HepG2 (cell line): ENCODE measurements at regions of chr10 and their contacts with region 1.

Region 1: DNA sequence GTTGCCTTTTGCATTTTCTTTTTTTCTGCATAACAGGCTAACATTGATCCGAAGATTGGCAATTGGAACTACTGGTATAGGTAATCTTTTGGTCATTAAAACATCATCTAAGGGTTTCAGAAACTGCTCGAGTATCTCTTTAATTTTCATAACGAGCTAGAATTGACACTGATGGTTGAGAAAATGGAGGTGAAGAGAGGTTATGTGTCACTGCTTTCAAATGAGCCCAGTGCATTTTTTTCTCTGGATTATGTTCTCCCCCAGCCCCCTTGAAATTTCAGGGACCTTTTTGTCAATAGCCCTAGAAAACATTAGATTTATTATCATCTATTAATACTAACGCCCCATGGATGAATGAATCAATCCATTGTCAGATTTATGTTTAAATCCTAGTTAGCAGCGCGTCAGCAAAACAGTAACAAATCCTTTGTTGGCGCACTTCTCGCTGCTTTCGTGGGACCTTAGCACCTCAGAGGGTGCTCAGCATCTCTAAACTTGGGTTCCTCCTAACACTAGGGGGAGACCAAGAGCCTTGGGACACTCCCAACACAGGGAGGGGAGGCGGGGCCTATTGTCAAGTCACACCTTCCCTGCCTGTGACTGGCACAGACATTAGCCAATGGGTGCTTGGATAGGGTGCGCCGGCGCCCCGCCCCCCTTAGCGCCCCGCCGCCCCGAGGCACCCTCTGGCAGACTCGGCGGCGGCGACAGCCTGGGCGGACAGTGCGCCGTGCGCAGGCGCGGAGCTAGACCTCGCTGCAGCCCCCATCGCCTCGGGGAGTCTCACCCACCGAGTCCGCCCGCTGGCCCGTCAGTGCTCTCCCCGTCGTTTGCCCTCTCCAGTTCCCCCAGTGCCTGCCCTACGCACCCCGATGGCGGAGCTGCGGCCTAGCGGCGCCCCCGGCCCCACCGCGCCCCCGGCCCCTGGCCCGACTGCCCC is at the start of gene SUFU:
- DNase-seq: peak; percentile 98
- ATAC-seq: peak; percentile 72
- H3K4me3 ChIP-seq: peak within 1 kb of the TSS; percentile 92 to 97 (median 96)
- H3K27ac ChIP-seq: peak within 1 kb of the TSS; percentile 75
- H3K4me1 ChIP-seq: peaks cover 49% of the 10 kb centered on the region
- H3K27me3 ChIP-seq: no peaks in the 10 kb centered on the region; a peak in 1 of 5 replicates
- CTCF ChIP-seq: peak; percentile 94
- EP300 ChIP-seq: no peak
- POLR2A ChIP-seq: peak; percentile 55 to 94
- RAD21 ChIP-seq: peak; percentile 69
- total RNA-seq, gene SUFU: 2.9 and 4.0 TPM in 2 replicates

Region 2: GRCh38 chr10:101818119-101818871 is 685.3 kb before region 1 on chr10 and contains the start of gene OGA:
- CTCF ChIA-PET with region 1: no interaction called
- POLR2A ChIA-PET with region 1: no interaction called
- in situ Hi-C with region 1: no loop called
- intact Hi-C with region 1: loop called (anchors 10 kb)
- DNase-seq: peak; percentile 99
- ATAC-seq: peak; percentile 90
- H3K4me3 ChIP-seq: peak within 1 kb of the TSS; percentile 81 to 95 (median 89)
- H3K27ac ChIP-seq: peak within 1 kb of the TSS; percentile 91
- H3K4me1 ChIP-seq: peaks cover 38% of the 10 kb centered on the region
- H3K27me3 ChIP-seq: no peaks in the 10 kb centered on the region; a peak in 1 of 5 replicates
- CTCF ChIP-seq: no peak
- EP300 ChIP-seq: peak in 1 of 2 experiments; percentile 47; a peak in 2 of 4 replicates
- POLR2A ChIP-seq: peak; percentile 85 to 87
- RAD21 ChIP-seq: peak; percentile 23; the same call in 1 of the 2 replicates
- total RNA-seq, gene OGA: 33.2 and 36.5 TPM in 2 replicates

Region 3: DNA sequence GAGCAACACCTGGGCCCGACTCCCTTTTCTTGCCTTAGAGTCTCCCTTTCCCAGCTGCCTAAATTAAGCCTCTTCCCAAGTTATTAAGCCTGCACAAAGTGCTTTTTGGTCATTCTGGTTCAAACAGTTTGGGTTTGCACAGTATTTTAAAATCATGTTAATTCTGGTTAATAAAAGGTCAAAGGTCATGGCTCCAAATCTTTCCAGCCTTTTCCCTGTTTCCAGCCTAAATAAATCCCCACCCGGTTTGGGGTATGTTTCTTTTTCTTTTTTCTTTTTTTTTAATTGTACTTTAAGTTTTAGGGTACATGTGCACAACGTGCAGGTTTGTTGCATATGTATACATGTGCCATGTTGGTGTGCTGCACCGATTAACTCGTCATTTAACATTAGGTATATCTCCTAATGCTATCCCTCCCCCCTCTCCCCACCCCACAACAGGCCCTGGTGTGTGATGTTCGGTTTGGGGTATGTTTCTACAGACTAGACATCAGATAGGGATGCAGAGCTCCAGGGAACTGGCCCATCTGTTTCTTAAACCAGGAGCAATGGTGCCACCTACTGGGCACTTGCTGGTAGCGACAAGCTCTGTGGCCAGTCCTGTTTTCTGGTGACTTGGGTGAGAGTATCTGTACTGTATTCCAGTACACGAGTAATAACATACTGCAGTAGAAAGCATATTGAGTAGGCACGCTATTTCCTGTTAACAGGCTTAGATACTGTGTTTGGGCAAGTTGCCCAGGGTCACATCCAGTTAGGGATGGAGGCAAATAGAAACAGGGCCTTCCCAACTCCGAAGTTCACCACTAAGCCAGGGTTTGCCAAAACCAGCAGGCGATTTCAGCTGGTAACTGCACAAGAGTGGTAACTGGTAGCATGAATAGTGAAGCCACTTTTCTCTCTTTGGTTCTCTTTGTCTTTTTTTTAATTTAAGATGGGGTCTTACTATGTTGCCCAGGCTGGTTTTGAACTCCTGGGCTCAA is 80.2 kb after region 1 on chr10:
- CTCF ChIA-PET with region 1: interaction called, 9 read pairs
- POLR2A ChIA-PET with region 1: interaction called, 8 read pairs
- in situ Hi-C with region 1: loop called (anchors 5 kb)
- intact Hi-C with region 1: loop called (anchors 2 kb)
- DNase-seq: peak; percentile 75
- ATAC-seq: peak; percentile 98
- H3K4me3 ChIP-seq: no peak overlapping the region
- H3K27ac ChIP-seq: no peak overlapping the region
- H3K4me1 ChIP-seq: peaks cover 6% of the 10 kb centered on the region
- H3K27me3 ChIP-seq: no peaks in the 10 kb centered on the region
- CTCF ChIP-seq: peak; percentile 93
- EP300 ChIP-seq: no peak
- POLR2A ChIP-seq: no peak
- RAD21 ChIP-seq: peak; percentile 84

Region 4: GRCh38 chr10:102596506-102596971 is 93.0 kb after region 1 on chr10:
- CTCF ChIA-PET with region 1: interaction called, 3 read pairs
- POLR2A ChIA-PET with region 1: interaction called, 7 read pairs
- in situ Hi-C with region 1: no loop called
- intact Hi-C with region 1: loop called (anchors 2 kb)
- DNase-seq: peak; percentile 70
- ATAC-seq: peak; percentile 60
- H3K4me3 ChIP-seq: peak overlapping the region in 1 of 3 experiments; percentile 47; a peak in 2 of 6 replicates
- H3K27ac ChIP-seq: peak overlapping the region; percentile 95
- H3K4me1 ChIP-seq: peaks cover 88% of the 10 kb centered on the region
- H3K27me3 ChIP-seq: no peaks in the 10 kb centered on the region
- CTCF ChIP-seq: peak; percentile 93
- EP300 ChIP-seq: no peak
- POLR2A ChIP-seq: no peak
- RAD21 ChIP-seq: peak; percentile 79

Region 5: DNA sequence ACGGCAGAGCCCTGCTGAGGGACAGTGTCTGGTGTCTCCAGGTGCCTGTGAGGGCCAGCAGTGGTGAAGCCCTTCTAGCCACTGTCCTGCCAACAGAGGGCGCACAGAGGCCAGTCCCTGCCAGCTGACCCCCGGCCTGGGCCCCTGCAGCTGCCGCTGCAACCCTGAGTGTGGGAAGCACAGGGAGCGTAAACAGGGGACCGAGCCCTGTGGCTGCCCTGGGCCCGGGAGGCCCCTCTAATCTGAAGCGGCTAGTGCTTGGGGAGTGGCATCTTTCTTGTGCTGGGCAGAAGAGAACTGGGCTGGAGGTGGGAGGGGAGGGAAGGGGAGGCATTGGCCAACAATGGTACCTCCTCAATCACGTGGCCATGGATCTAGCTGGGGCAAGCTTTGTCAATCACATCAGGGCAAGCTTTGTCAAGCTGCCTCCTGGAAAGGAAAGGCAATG is 175.3 kb after region 1 on chr10:
- CTCF ChIA-PET with region 1: no interaction called
- POLR2A ChIA-PET with region 1: no interaction called
- in situ Hi-C with region 1: no loop called
- intact Hi-C with region 1: loop called (anchors 5 kb)
- DNase-seq: peak; percentile 76
- ATAC-seq: peak; percentile 93
- H3K4me3 ChIP-seq: peak overlapping the region in 2 of 3 experiments; percentile 19 to 62; a peak in 3 of 6 replicates
- H3K27ac ChIP-seq: no peak overlapping the region
- H3K4me1 ChIP-seq: peaks cover 56% of the 10 kb centered on the region
- H3K27me3 ChIP-seq: no peaks in the 10 kb centered on the region
- CTCF ChIP-seq: peak; percentile 96
- EP300 ChIP-seq: no peak
- POLR2A ChIP-seq: no peak
- RAD21 ChIP-seq: peak; percentile 91